AG04449 (cell line): ENCODE measurements at regions of chr11 and their contacts with region 1.

Region 1: DNA sequence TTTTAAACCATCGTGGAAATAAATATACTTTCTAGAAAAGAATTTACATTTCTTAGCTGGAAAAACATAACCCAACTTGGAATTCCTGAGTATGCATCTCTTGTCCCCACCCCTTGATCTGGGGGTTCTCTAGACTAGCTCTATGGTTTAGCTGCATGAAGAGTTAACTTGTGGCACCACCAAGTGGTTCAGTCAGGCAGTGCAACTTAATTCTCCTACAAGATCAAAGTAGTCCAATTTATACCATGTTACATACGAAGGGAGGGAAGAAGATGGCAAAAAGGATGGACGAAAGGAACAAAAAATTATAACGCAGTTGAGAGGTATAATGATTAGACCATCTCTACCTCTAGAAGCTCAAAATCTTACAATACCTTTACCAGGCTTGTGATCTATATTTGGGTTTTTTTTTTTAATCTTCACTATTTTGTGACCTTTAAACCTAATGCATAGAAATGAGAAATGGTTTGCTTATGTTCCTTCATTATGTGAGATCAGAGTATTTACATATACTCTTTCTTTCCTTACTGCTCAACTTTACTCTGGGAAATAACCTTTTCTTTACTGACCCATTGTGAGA is 28.5 kb upstream of the ALKBH3 start:
- DNase-seq: peak; percentile 50
- H3K4me3 ChIP-seq: no peak overlapping the region
- CTCF ChIP-seq: peak; percentile 74

Region 2: DNA sequence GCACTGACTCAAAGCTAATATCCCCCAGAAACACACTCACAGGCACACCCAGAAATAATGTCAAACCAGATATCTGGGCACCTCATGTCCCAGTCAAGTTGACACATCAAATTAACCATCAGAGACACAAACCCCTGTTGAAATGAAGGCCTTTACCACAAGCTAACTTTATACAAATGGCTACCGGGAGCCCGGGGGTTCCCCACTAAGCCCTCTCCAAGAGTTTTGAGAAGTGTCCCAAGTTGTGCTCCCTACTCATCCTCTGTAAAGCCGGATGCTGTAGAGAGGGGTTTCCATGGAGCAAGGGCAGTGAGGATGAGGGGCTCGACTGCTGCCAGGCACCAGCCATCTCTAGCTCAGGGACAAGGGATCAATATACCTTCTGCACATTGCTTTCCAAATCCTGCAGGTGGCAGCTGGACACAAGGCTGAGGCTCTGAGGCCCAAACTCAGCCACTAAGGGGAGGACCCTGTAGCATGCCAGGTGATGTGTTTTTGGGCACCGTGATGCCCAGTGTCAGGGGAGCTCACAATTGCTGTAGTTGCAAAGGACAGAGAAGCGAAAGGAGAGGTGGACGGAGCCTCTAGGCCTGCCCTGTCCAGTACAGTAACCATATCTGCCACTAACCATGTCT is 347.7 kb before region 1 on chr11:
- CTCF ChIA-PET with region 1: interaction called, 25 read pairs
- POLR2A ChIA-PET with region 1: no interaction called
- DNase-seq: no peak
- H3K4me3 ChIP-seq: no peak overlapping the region
- CTCF ChIP-seq: peak; percentile 25

Region 3: GRCh38 chr11:43567396-43567975 is 284.7 kb before region 1 on chr11:
- CTCF ChIA-PET with region 1: interaction called, 17 read pairs
- POLR2A ChIA-PET with region 1: no interaction called
- DNase-seq: no peak
- H3K4me3 ChIP-seq: no peak overlapping the region
- CTCF ChIP-seq: peak; percentile 53

Region 4: GRCh38 chr11:43825217-43825816 is 26.8 kb before region 1 on chr11:
- CTCF ChIA-PET with region 1: interaction called, 148 read pairs
- POLR2A ChIA-PET with region 1: no interaction called
- DNase-seq: no peak
- H3K4me3 ChIP-seq: no peak overlapping the region
- CTCF ChIP-seq: peak; percentile 66

Region 5: GRCh38 chr11:43833657-43834073 is 18.5 kb before region 1 on chr11:
- CTCF ChIA-PET with region 1: interaction called, 148 read pairs
- POLR2A ChIA-PET with region 1: no interaction called
- DNase-seq: peak; percentile 26
- H3K4me3 ChIP-seq: no peak overlapping the region
- CTCF ChIP-seq: no peak

Region 6: GRCh38 chr11:43842021-43842420 is 10.1 kb before region 1 on chr11:
- CTCF ChIA-PET with region 1: interaction called, 75 read pairs
- POLR2A ChIA-PET with region 1: no interaction called
- DNase-seq: no peak
- H3K4me3 ChIP-seq: no peak overlapping the region
- CTCF ChIP-seq: no peak

Region 7: DNA sequence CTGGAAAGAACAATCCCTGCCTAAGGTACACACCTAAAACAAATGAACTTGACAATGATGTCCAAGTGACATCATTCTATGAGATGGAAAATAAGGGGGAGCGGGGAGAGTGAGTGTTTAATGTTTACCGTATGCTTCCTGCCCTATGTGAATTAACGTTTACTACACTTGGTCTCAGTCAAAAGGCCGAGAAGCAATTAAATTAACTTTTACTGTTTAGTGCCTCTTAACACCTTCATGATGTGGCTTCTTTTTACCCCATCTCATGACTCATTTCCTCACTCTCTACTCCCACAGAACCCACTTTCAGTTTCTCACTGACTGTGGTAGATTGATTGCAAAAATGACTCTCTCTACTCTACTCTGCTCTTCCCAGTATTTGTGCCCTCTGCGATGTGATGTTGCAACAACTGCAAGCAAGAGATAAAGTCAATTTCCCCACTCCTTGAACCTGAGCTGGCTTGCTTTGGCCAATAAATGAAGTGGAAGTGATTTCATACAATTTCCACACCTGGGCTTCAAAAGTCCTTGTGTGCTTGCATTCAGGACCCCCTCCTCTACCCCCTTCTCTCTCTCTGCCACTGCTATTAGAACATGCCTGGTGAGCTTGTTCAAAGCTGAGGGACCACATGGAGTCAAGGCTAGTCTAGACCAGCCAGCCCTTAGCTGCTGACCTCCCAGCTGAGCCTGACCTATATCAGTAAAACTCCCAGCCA is 16.9 kb after region 1 on chr11:
- CTCF ChIA-PET with region 1: interaction called, 21 read pairs
- POLR2A ChIA-PET with region 1: no interaction called
- DNase-seq: peak; percentile 42
- H3K4me3 ChIP-seq: no peak overlapping the region
- CTCF ChIP-seq: no peak